Panc1 (cell line): ENCODE measurements at regions of chrX and their contacts with region 1.

Region 1: GRCh38 chrX:108224727-108225621 is 133.4 kb downstream of the ATG4A start:
- DNase-seq: no peak
- ATAC-seq: peak; percentile 75; the same call in 1 of the 2 replicates
- H3K4me3 ChIP-seq: no peak overlapping the region
- H3K27ac ChIP-seq: no peak overlapping the region
- H3K4me1 ChIP-seq: no peaks in the 10 kb centered on the region
- H3K27me3 ChIP-seq: no peaks in the 10 kb centered on the region
- CTCF ChIP-seq: peak; percentile 78

Region 2: DNA sequence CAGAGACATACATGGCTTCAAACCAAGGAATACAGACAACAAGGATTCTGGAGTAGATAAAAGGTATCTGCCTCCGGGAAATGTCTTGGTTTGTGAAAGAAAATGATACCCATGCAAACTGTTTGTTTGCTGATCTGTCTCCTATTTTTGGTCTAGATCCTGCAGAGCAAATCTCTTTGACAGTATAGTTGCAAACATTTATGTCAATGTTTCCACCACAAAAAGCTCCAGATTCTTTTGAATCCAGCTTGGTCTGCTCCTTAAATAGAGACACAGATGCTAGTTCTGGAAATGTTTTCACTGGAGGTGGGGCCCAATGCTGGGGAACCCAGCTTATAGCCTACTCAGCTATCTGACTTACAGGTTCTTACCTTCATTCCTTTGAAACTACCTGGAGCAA is 13.7 kb before region 1 on chrX:
- CTCF ChIA-PET with region 1: no interaction called
- POLR2A ChIA-PET with region 1: no interaction called
- in situ Hi-C with region 1: no loop called
- intact Hi-C with region 1: no loop called
- DNase-seq: no peak
- ATAC-seq: no peak
- H3K4me3 ChIP-seq: no peak overlapping the region
- H3K27ac ChIP-seq: no peak overlapping the region
- H3K4me1 ChIP-seq: no peaks in the 10 kb centered on the region
- H3K27me3 ChIP-seq: no peaks in the 10 kb centered on the region
- CTCF ChIP-seq: no peak

Region 3: DNA sequence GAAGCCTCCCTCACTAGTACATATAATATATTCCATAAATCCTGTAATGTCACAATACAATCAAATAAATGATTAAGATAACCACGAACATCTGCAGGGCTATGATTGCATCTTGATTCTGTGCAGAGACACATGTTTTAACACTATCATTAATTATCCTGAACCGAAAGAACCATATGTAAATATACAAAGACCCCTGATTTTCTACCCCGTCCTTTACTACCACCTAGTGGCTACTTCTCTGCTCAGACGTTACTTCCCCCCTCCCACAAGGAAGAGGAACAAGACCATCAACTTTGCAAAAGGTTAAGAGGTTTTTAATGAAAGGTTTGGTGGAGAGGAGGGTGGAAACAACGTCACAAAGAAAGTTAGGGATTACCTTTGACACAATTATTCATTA is 79.2 kb after region 1 on chrX:
- CTCF ChIA-PET with region 1: interaction called, 3 read pairs
- POLR2A ChIA-PET with region 1: no interaction called
- in situ Hi-C with region 1: no loop called
- intact Hi-C with region 1: loop called (anchors 10 kb)
- DNase-seq: no peak
- ATAC-seq: no peak
- H3K4me3 ChIP-seq: no peak overlapping the region
- H3K27ac ChIP-seq: no peak overlapping the region
- H3K4me1 ChIP-seq: no peaks in the 10 kb centered on the region
- H3K27me3 ChIP-seq: no peaks in the 10 kb centered on the region; the same call in 1 of the 2 replicates
- CTCF ChIP-seq: peak; percentile 39; the same call in 1 of the 2 replicates

Region 4: DNA sequence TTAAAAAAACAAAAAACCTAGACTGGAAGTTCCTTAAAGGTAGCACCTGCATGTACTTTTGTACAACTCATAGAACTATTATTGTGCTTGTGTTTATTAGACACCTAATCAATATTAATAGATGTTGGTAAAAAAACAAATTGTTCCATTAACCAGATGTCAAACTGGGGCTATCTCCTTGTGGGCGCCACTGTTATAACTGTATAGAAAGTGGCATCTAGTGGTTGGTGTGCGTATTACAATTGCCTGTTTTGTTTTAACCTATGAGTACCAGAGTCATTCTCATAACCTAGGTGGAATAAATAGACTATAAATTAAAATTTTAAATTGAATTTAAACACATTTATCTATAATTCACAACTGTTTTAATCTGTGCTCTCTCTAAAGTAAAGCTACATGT is 312.0 kb after region 1 on chrX:
- CTCF ChIA-PET with region 1: interaction called, 7 read pairs
- POLR2A ChIA-PET with region 1: no interaction called
- in situ Hi-C with region 1: no loop called
- intact Hi-C with region 1: loop called (anchors 2 kb)
- DNase-seq: peak; percentile 10
- ATAC-seq: no peak; the same call in 1 of the 2 replicates
- H3K4me3 ChIP-seq: no peak overlapping the region
- H3K27ac ChIP-seq: no peak overlapping the region
- H3K4me1 ChIP-seq: no peaks in the 10 kb centered on the region
- H3K27me3 ChIP-seq: no peaks in the 10 kb centered on the region
- CTCF ChIP-seq: peak; percentile 70; the same call in 1 of the 2 replicates